AG04449 (cell line): ENCODE measurements at regions of chr3 and their contacts with region 1.

Region 1: GRCh38 chr3:187714404-187714979 is 12.1 kb upstream of the RTP2 start:
- DNase-seq: no peak
- H3K4me3 ChIP-seq: no peak overlapping the region
- CTCF ChIP-seq: peak; percentile 90

Region 2: GRCh38 chr3:187227658-187228258 is 486.7 kb before region 1 on chr3:
- CTCF ChIA-PET with region 1: interaction called, 12 read pairs
- POLR2A ChIA-PET with region 1: no interaction called
- DNase-seq: peak; percentile 46
- H3K4me3 ChIP-seq: no peak overlapping the region
- CTCF ChIP-seq: no peak

Region 3: GRCh38 chr3:187473778-187474406 is 240.6 kb before region 1 on chr3:
- CTCF ChIA-PET with region 1: no interaction called
- POLR2A ChIA-PET with region 1: no interaction called
- DNase-seq: no peak
- H3K4me3 ChIP-seq: no peak overlapping the region
- CTCF ChIP-seq: no peak

Region 4: DNA sequence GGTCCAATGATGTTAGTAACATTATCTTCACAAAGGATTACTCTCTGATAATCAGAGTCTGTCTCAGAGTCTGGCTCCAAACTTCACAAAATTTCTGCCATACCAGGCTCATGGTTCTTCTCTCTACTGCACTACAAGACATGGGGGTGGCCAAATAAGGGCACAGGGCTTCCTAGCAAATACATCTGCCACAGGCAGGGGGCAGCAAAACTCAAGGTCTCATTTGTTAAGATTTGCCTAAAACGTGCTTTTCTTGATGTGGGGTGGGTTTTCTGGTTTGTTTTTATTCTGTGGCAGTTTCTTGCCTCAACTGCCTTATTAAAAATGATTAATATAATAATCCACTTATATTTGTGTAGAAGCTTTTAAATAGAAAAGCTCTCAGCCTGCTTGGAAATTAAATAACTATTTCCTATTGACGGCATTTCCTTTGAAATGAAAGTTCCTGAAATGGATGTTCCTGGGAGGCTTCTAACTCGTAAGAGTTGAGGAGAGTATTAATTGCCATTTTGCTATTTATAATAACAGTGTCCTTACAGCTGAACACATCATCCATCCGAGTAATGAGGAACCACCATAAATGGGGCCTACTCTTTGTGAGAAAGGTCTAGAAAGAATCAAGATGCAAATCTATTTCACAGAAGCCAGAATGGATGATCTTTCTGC is 98.1 kb before region 1 on chr3:
- CTCF ChIA-PET with region 1: interaction called, 11 read pairs
- POLR2A ChIA-PET with region 1: no interaction called
- DNase-seq: no peak
- H3K4me3 ChIP-seq: no peak overlapping the region
- CTCF ChIP-seq: peak; percentile 66

Region 5: GRCh38 chr3:187725653-187726370 is 11.3 kb after region 1 on chr3:
- CTCF ChIA-PET with region 1: interaction called, 13 read pairs
- POLR2A ChIA-PET with region 1: interaction called, 3 read pairs
- DNase-seq: no peak
- H3K4me3 ChIP-seq: no peak overlapping the region
- CTCF ChIP-seq: no peak

Region 6: DNA sequence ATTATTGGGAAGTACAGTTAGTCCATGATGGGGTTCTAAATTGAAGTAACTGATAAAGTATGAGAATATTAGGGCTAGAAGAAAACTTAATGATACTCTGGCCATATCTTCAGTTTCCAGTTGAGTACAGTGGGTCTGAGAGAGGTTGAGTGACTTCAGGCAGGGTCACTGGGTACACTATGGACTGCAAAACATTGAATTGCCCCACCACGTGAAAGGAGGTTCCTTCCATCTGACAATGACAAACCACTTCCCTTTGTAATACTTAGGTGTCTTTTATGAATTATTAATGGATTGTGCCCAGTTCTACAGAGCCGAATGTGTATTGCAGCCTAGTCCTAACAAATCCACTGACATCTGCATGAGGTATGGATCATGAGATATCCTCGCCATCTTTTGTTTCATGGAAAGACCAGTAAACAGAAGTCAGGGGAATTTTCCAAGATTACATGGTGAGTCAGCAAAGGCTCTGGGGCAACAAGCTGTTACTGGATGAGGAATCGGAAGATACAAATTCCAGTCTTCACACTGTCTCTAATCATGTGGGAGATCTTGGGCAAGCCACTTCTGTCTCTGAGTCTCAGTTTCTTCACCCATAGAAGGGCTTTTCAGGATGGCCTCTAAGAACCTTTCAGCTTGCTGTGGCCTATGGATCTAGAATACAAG is 97.2 kb after region 1 on chr3:
- CTCF ChIA-PET with region 1: no interaction called
- POLR2A ChIA-PET with region 1: no interaction called
- DNase-seq: peak; percentile 51
- H3K4me3 ChIP-seq: no peak overlapping the region
- CTCF ChIP-seq: no peak